ENCODE measurements at regions of chr19 and their contacts with region 1.

Region 1: GRCh38 chr19:6424939-6425731 is 524 bp upstream of the KHSRP start:
- DNase-seq: peak; percentile 100
- ATAC-seq: peak; percentile 86
- H3K4me3 Mint-ChIP-seq: peak overlapping the region; percentile 72
- H3K27ac Mint-ChIP-seq: peak overlapping the region; percentile 95
- H3K4me1 Mint-ChIP-seq: peaks cover 35% of the 10 kb centered on the region
- H3K27me3 Mint-ChIP-seq: no peaks in the 10 kb centered on the region
- CTCF ChIP-seq: no peak

Region 2: DNA sequence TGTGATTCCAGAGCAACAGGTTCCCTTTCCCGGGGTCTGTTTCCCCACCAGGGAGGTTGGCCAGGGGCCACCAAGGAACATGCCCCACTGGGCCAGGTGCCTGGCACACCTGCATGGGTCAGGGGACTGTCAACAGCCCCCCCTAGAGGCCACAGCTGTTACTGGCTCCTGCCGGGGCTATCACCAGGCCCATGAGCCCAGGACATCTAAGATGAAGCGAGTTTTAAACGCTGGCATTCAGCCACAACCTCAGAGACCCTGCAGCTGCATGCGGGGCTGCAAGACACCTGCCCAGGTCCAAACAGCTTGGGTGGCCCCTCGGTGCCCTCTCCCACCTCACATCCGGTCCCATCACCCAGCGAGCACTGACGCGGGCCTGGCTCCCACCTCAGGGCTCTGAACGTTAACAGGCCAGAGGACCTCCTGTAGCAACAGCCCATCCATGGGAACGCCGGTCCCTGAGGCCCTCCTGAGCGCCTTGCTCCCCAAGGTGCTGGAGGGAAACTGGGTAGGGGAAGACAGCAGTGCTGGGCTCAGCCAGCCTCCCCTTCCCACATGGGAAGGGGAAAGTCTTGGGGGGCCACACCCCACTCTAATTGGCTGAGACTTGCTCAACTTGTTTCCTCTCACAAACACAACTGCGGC is 12.6 kb before region 1 on chr19:
- CTCF ChIA-PET with region 1: interaction called, 5 read pairs
- POLR2A ChIA-PET with region 1: interaction called, 17 read pairs
- intact Hi-C with region 1: no loop called
- DNase-seq: peak; percentile 71
- ATAC-seq: peak; percentile 83
- H3K4me3 Mint-ChIP-seq: no peak overlapping the region
- H3K27ac Mint-ChIP-seq: no peak overlapping the region
- H3K4me1 Mint-ChIP-seq: no peaks in the 10 kb centered on the region
- H3K27me3 Mint-ChIP-seq: no peaks in the 10 kb centered on the region
- CTCF ChIP-seq: peak; percentile 85

Region 3: DNA sequence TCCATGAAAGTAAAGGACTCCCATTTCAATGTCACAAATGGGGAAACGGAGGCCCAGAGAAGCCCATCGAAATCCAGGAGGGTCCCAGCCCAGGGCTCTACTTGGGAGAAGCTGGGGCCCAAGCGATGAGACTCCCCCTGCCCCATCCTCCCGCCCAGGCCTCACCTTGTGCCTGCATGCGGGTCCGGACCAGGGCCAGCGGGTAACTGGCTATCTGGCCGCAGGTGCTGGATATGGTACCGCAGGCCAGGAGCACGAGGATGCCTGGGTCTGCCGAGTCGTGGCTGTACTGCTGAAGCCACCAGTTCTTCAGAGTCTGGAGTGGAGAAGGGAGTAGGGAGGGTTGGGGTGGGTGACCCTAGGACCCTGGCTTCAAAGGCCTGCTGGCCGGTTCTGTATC is 18.9 kb after region 1 on chr19:
- CTCF ChIA-PET with region 1: no interaction called
- POLR2A ChIA-PET with region 1: no interaction called
- intact Hi-C with region 1: no loop called
- DNase-seq: no peak
- ATAC-seq: no peak
- H3K4me3 Mint-ChIP-seq: no peak overlapping the region
- H3K27ac Mint-ChIP-seq: no peak overlapping the region
- H3K4me1 Mint-ChIP-seq: no peaks in the 10 kb centered on the region
- H3K27me3 Mint-ChIP-seq: no peaks in the 10 kb centered on the region
- CTCF ChIP-seq: no peak

Region 4: GRCh38 chr19:6481541-6482342 is 56.6 kb after region 1 on chr19 and contains the start of gene DENND1C:
- CTCF ChIA-PET with region 1: interaction called, 4 read pairs
- POLR2A ChIA-PET with region 1: interaction called, 10 read pairs
- intact Hi-C with region 1: no loop called
- DNase-seq: peak; percentile 87
- ATAC-seq: peak; percentile 87
- H3K4me3 Mint-ChIP-seq: peak within 1 kb of the TSS; percentile 100
- H3K27ac Mint-ChIP-seq: peak within 1 kb of the TSS; percentile 96
- H3K4me1 Mint-ChIP-seq: peaks cover 26% of the 10 kb centered on the region
- H3K27me3 Mint-ChIP-seq: no peaks in the 10 kb centered on the region
- CTCF ChIP-seq: peak; percentile 42
- total RNA-seq, gene DENND1C: 58.2 to 61.2 TPM

Measured in activated CD8-positive, alpha-beta T cell treated with anti-CD3 and anti-CD28 coated beads for 36 hours (primary cell).